Activated CD8-positive, alpha-beta T cell treated with anti-CD3 and anti-CD28 coated beads for 36 hours (primary cell): ENCODE measurements at regions of chr20 and their contacts with region 1.

Region 1: GRCh38 chr20:24608926-24609667 is 139.7 kb downstream of the SYNDIG1 start:
- DNase-seq: no peak
- ATAC-seq: no peak
- H3K4me3 Mint-ChIP-seq: no peak overlapping the region
- H3K27ac Mint-ChIP-seq: no peak overlapping the region
- H3K4me1 Mint-ChIP-seq: no peaks in the 10 kb centered on the region
- H3K27me3 Mint-ChIP-seq: no peaks in the 10 kb centered on the region
- CTCF ChIP-seq: no peak

Region 2: DNA sequence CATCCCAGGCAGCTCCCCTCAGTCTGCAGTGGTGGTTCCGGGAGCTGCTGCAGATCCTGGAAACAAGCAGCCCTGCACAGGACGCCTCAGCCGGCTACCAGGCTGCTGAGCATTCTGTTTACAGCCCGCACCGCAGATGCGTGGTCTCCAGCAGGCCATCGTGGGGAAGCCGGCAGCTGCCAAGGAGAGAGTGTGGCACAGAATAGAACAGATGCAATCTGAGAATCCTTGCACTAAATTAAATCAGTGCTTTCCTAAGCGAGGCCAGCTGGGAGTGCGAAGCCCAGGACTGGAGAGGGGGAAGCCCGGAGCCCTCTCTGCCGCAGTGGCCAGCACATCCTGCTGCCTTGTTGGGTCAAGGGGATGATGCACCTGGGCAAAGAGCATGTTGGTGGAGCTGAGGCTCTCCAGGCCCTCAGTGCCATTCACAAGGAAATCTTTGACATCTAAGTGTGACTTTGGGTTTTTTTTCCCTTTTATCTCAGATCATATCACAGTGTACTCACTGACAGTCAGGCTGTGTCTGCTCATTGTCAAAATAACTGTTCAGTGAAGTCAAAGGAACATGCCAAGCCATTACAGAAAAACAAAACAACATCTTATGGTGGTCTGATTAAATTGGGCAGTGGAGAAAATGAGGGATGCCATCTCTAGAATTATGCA is 21.6 kb before region 1 on chr20:
- CTCF ChIA-PET with region 1: no interaction called
- POLR2A ChIA-PET with region 1: no interaction called
- intact Hi-C with region 1: no loop called
- DNase-seq: no peak
- ATAC-seq: no peak
- H3K4me3 Mint-ChIP-seq: no peak overlapping the region
- H3K27ac Mint-ChIP-seq: no peak overlapping the region
- H3K4me1 Mint-ChIP-seq: no peaks in the 10 kb centered on the region
- H3K27me3 Mint-ChIP-seq: no peaks in the 10 kb centered on the region
- CTCF ChIP-seq: no peak

Region 3: DNA sequence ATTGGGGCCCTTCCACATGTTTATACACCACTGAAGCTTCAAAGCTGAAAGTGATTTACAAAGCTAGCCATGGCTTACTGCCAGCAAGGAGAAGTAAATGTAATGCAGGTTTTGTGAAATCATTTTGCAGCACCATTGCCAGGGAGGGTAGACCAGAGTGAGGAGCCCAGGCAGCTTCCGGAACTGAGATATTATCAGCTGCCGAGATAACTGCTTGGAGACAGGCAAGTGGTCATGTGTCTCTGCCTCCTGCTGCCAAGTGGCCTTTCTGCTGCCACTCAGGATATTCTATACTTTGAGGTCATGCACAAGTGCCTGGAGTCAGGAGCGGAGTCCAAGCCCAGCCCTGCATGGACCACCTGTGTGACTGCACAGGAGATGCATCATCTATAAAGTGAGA is 20.6 kb after region 1 on chr20:
- CTCF ChIA-PET with region 1: no interaction called
- POLR2A ChIA-PET with region 1: interaction called, 3 read pairs
- intact Hi-C with region 1: loop called (anchors 2 kb)
- DNase-seq: no peak
- ATAC-seq: no peak
- H3K4me3 Mint-ChIP-seq: no peak overlapping the region
- H3K27ac Mint-ChIP-seq: no peak overlapping the region
- H3K4me1 Mint-ChIP-seq: peaks cover 6% of the 10 kb centered on the region
- H3K27me3 Mint-ChIP-seq: no peaks in the 10 kb centered on the region
- CTCF ChIP-seq: no peak